Left ventricle myocardium superior (tissue), 1 donor: ENCODE measurements at regions of chr7 and their contacts with region 1.

Region 1: GRCh38 chr7:107874605-107875446 is 16.2 kb upstream of the DLD start:
- DNase-seq: no peak
- ATAC-seq: peak; percentile 84

Region 2: GRCh38 chr7:107743567-107744344 is 131.1 kb before region 1 on chr7 and contains the start of gene CBLL1:
- intact Hi-C with region 1: loop called (anchors 2 kb)
- DNase-seq: peak; percentile 99
- ATAC-seq: peak; percentile 99
- total RNA-seq, gene CBLL1: 24.8 TPM

Region 3: GRCh38 chr7:107948645-107949497 is 74.0 kb after region 1 on chr7:
- intact Hi-C with region 1: no loop called
- DNase-seq: no peak
- ATAC-seq: no peak